PC-9 (cell line): ENCODE measurements at regions of chr11 and their contacts with region 1.

Region 1: DNA sequence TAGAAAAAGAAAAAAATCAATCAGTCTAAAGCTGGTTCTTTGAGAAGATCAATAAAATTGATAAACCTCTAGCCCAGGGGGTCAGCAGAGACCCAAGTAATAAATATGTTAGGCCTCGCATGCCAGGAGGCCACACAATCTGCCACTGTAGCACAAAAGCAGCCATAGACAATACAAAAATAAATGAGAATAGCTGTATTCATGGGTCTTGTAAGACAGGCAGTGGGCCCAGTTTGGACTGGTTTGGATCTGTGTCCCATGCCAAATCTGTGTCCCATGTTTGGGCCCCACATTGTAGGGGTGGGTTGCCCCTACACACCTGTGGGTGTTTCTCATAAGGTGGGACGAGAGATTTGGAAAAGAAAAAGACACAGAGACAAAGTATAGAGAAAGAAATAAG is 6.6 kb upstream of the PLAAT4 start:
- DNase-seq: no peak
- H3K4me3 ChIP-seq: no peak overlapping the region
- H3K27ac ChIP-seq: no peak overlapping the region
- H3K4me1 ChIP-seq: peaks cover 36% of the 10 kb centered on the region
- H3K27me3 ChIP-seq: no peaks in the 10 kb centered on the region
- CTCF ChIP-seq: no peak

Region 2: DNA sequence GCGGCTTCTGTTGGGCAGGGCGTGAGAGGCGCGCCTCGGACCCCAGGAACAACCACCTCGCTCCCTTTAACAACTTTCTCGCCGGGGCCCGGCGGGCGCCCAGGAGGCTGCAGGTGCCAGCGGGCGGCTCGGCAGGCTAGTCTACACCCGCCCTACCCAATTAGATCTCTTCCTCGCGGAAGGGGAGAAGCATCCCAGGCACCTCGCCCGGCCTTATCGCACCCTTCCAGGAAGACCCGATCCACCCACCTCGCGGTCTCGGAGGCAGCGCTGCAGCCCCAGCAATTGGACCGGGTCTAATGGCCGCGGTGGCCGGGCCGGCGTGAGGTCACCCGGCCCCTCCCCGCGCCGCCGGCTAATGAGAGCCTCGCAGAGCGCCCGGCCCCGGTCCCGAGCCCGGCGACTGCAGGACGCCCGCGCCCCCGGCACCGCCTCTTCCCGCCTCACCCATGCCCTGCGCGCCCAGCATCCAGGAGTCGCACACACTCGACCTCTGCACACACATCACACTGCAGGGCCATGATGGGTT is 84.2 kb after region 1 on chr11 and contains the start of gene PLAAT3:
- CTCF ChIA-PET with region 1: no interaction called
- POLR2A ChIA-PET with region 1: no interaction called
- intact Hi-C with region 1: loop called (anchors 2 kb)
- DNase-seq: peak; percentile 77 to 92
- H3K4me3 ChIP-seq: peak within 1 kb of the TSS; percentile 74
- H3K27ac ChIP-seq: peak within 1 kb of the TSS; percentile 41
- H3K4me1 ChIP-seq: peaks cover 38% of the 10 kb centered on the region
- H3K27me3 ChIP-seq: no peaks in the 10 kb centered on the region
- CTCF ChIP-seq: no peak
- total RNA-seq, gene PLAAT3: 240 and 266 TPM in 2 replicates

Region 3: DNA sequence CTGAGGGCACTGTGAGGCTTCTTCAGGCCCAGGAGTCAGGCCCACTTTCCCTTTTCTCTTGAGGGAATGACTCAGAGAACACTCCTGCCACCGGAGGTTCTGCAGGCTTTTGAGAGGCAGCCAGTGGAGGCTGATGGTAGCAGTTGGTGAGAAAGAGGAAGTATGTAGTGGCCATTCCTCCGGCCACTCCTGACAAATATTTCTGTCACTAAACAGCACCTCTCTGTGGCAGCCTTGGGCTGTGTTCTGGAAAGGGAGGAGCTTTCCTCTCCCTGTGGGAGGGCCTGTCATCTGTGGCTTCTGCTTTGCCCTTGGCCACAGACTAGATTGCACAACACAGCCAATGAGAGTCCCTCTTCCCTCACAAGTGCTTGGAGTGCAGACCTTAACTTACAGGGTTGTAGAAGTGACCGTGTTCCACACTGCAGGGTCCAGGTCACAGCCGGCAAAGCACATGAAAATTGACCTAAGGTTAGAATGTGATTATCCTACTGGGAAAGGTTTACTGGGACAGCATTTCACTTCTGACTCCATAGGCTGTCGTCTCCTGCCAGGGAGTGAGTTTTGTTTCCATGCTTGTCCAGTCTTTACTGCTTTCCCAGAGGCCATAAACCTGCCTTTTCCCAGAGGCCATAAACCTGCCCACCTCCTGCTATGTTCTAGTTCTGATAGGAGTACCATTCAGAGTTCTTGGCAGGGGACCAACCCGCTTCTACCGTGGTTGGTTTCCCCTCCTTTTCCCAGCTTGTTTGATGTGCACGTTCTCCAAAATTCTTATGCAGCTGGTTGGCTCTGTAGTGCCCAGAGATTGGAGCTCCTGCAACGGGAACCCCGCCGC is 342.2 kb after region 1 on chr11:
- CTCF ChIA-PET with region 1: no interaction called
- POLR2A ChIA-PET with region 1: no interaction called
- intact Hi-C with region 1: no loop called
- DNase-seq: peak; percentile 93 to 99
- H3K4me3 ChIP-seq: peak overlapping the region; percentile 23; the same call in 1 of the 2 replicates
- H3K27ac ChIP-seq: peak overlapping the region; percentile 39
- H3K4me1 ChIP-seq: peaks cover 66% of the 10 kb centered on the region
- H3K27me3 ChIP-seq: no peaks in the 10 kb centered on the region
- CTCF ChIP-seq: peak; percentile 62